Activated CD8-positive, alpha-beta T cell treated with anti-CD3 and anti-CD28 coated beads for 36 hours (primary cell): ENCODE measurements at regions of chr2 and their contacts with region 1.

Region 1: GRCh38 chr2:97656905-97657587 is 6.8 kb downstream of the ACTR1B start:
- DNase-seq: no peak
- ATAC-seq: no peak
- H3K4me3 Mint-ChIP-seq: no peak overlapping the region
- H3K27ac Mint-ChIP-seq: no peak overlapping the region
- H3K4me1 Mint-ChIP-seq: peaks cover 32% of the 10 kb centered on the region
- H3K27me3 Mint-ChIP-seq: no peaks in the 10 kb centered on the region
- CTCF ChIP-seq: no peak

Region 2: DNA sequence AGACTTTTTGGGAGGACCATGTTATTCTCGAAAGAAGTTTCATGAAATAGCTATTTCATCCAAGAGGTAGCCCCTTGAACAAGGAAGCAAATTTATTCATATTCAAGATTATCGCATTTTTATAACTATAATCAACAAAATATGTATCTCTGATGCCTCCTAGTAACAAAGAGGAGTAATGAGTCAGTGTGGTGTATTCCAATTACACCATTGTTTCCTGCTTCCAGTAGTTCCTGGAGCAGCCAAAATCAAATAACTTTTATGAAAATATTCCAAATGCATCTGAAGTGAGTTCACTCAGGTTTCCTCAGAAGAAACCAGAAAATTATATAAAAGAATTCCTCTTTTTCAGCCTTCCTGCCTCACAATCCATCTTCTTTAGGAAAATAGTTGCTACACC is 110.3 kb before region 1 on chr2:
- CTCF ChIA-PET with region 1: no interaction called
- POLR2A ChIA-PET with region 1: no interaction called
- intact Hi-C with region 1: no loop called
- DNase-seq: no peak
- ATAC-seq: no peak
- H3K4me3 Mint-ChIP-seq: no peak overlapping the region
- H3K27ac Mint-ChIP-seq: no peak overlapping the region
- H3K4me1 Mint-ChIP-seq: no peaks in the 10 kb centered on the region
- H3K27me3 Mint-ChIP-seq: no peaks in the 10 kb centered on the region
- CTCF ChIP-seq: no peak

Region 3: GRCh38 chr2:97617911-97618310 is 39.1 kb before region 1 on chr2:
- CTCF ChIA-PET with region 1: no interaction called
- POLR2A ChIA-PET with region 1: no interaction called
- intact Hi-C with region 1: no loop called
- DNase-seq: no peak
- ATAC-seq: no peak
- H3K4me3 Mint-ChIP-seq: no peak overlapping the region
- H3K27ac Mint-ChIP-seq: no peak overlapping the region
- H3K4me1 Mint-ChIP-seq: no peaks in the 10 kb centered on the region
- H3K27me3 Mint-ChIP-seq: no peaks in the 10 kb centered on the region
- CTCF ChIP-seq: no peak

Region 4: GRCh38 chr2:97645695-97646629 is 11.1 kb before region 1 on chr2 and contains the start of gene COX5B:
- CTCF ChIA-PET with region 1: interaction called, 68 read pairs
- POLR2A ChIA-PET with region 1: interaction called, 210 read pairs
- intact Hi-C with region 1: no loop called
- DNase-seq: peak; percentile 100
- ATAC-seq: peak; percentile 97
- H3K4me3 Mint-ChIP-seq: peak within 1 kb of the TSS; percentile 90
- H3K27ac Mint-ChIP-seq: peak within 1 kb of the TSS; percentile 98
- H3K4me1 Mint-ChIP-seq: peaks cover 15% of the 10 kb centered on the region
- H3K27me3 Mint-ChIP-seq: no peaks in the 10 kb centered on the region
- CTCF ChIP-seq: no peak
- total RNA-seq, gene COX5B: 233 to 238 TPM